OCI-LY7 (cell line): ENCODE measurements at regions of chr11 and their contacts with region 1.

Region 1: DNA sequence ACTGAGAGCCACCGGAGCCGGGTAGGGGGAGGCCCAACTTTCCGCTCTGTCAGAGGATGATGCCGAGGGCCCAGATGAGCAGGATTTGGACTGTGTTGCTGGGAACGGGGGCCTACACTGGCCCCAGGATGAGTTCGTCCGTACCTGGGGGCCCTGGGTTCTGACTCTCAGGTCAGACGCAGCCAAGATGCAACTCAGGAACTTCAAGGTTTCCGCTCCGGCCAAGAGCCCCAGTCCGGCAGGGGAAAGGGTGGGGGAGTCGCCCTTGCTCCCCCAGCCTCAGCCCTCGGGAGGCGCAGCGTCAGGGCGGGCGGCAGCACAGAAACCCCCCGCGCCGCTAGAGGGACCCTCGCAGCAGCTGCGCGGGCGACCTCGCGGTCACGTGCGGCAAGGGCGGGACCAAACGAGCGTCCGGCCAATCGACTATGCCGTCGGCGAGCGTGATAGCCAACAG is 241 bp upstream of the ARL2 start:
- DNase-seq: peak; percentile 98
- H3K4me3 ChIP-seq: peak overlapping the region; percentile 83
- H3K27ac ChIP-seq: peak overlapping the region; percentile 92
- H3K4me1 ChIP-seq: peaks cover 26% of the 10 kb centered on the region
- CTCF ChIP-seq: peak; percentile 71

Region 2: GRCh38 chr11:64916775-64917662 is 96.7 kb before region 1 on chr11 and contains the start of gene ATG2A:
- CTCF ChIA-PET with region 1: no interaction called
- POLR2A ChIA-PET with region 1: interaction called, 4 read pairs
- intact Hi-C with region 1: loop called (anchors 1 kb)
- DNase-seq: peak; percentile 100
- H3K4me3 ChIP-seq: peak within 1 kb of the TSS; percentile 87
- H3K27ac ChIP-seq: peak within 1 kb of the TSS; percentile 63
- H3K4me1 ChIP-seq: peaks cover 32% of the 10 kb centered on the region
- CTCF ChIP-seq: no peak
- total RNA-seq, gene ATG2A: 18.1 and 29.0 TPM in 2 replicates

Region 3: GRCh38 chr11:64971421-64972233 is 42.1 kb before region 1 on chr11 and contains the start of gene MAJIN:
- CTCF ChIA-PET with region 1: no interaction called
- POLR2A ChIA-PET with region 1: no interaction called
- intact Hi-C with region 1: loop called (anchors 1 kb)
- DNase-seq: no peak
- H3K4me3 ChIP-seq: no peak within 1 kb of the TSS
- H3K27ac ChIP-seq: peak within 1 kb of the TSS; percentile 93
- H3K4me1 ChIP-seq: peaks cover 59% of the 10 kb centered on the region
- CTCF ChIP-seq: no peak
- total RNA-seq, gene MAJIN: not detected in 2 replicates

Region 4: GRCh38 chr11:65027213-65028067 is 13.7 kb after region 1 on chr11 and contains the start of gene SNX15:
- CTCF ChIA-PET with region 1: no interaction called
- POLR2A ChIA-PET with region 1: interaction called, 3 read pairs
- intact Hi-C with region 1: loop called (anchors 1 kb)
- DNase-seq: peak; percentile 99
- H3K4me3 ChIP-seq: peak within 1 kb of the TSS; percentile 66
- H3K27ac ChIP-seq: peak within 1 kb of the TSS; percentile 75
- H3K4me1 ChIP-seq: peaks cover 18% of the 10 kb centered on the region
- CTCF ChIP-seq: peak; percentile 57
- total RNA-seq, gene SNX15: 25.9 and 31.6 TPM in 2 replicates

Region 5: DNA sequence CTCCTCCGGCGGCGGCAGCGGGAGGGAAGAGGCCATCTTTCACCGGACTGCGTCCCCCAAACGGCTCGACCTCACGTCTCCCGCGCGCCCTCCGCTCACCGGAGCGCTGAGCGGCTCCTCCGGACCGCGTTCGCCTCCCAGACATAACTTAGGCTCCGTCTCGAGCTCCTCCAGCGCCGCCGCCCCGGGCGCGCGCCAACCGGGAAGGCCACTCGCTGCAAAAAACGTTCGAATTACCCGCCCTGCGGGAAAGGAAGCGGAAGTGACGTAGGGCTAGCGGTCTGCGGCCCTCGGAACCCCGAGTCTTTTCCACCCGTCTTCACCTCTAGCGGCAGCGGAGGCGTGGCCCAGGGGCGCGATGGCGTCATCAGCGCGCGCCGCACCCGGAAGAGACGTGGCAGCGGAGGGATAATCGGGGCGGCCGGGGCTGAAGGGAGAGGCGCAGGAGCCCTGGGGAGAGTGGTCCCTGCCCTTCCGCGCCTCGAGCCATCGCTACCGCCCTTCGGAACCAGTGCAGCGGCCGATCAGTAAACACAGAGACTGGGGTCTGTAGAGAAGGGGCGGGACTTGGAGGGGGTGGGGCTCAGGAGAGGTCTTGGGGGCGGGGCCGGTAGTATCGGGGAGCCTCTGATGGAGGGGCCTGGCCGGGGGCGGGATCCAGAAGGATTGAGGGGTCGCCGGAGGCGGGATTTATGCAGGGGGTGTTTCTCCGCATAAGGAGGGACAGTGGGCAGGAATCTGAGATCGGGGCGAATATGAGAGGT is 70.3 kb after region 1 on chr11 and contains the starts of genes CDCA5 and ZFPL1:
- CTCF ChIA-PET with region 1: interaction called, 3 read pairs
- POLR2A ChIA-PET with region 1: no interaction called
- intact Hi-C with region 1: loop called (anchors 5 kb)
- DNase-seq: peak; percentile 97
- H3K4me3 ChIP-seq: peak within 1 kb of the TSS; percentile 91
- H3K27ac ChIP-seq: peak within 1 kb of the TSS; percentile 74
- H3K4me1 ChIP-seq: peaks cover 49% of the 10 kb centered on the region
- CTCF ChIP-seq: no peak
- total RNA-seq, gene CDCA5: 119 and 135 TPM in 2 replicates
- total RNA-seq, gene ZFPL1: 39.5 and 43.9 TPM in 2 replicates

Region 6: DNA sequence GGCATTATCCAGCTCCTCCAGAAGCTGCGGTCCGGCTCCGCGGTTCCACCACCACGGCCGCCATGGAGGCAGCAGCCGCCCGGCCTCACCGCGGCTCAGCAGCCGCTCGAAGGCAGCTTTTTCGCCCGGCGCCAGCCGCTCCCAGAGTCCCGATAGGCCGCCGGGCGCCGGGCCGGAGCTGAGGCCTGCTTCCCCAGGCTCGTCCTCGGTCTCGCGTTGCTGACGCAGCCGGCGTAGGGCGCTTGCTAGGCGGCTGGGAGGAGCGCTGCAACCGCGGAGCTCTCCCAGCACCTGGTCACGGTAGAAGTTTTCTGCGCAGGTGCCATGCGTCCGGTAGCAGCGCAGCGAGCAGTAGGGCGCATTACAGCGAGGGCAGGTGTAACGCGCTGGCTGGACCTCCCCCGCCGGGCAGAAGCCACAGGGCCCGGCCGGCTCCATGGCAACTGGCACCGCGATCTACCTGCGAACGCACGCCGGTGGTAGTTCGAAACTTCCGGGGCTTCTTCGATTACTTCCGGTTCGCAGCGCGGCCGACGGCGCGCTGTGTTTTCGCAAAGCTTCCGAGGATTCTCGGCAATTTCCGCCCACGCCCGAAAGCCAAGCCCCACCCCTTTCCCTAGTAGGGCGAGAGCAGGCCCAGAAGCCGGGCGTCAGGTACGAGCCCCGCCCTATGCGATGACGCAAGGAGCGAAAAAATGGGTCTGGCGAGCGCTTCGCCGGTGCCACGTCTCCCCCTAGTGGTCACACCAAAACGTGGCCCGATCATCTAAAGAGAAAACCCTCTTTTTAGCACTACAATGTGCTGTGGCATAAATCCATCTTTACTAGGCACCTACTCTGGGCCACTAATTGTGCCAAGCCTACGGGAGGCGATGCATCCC is 103.7 kb after region 1 on chr11 and contains the start of gene ZNHIT2:
- CTCF ChIA-PET with region 1: no interaction called
- POLR2A ChIA-PET with region 1: interaction called, 4 read pairs
- intact Hi-C with region 1: loop called (anchors 1 kb)
- DNase-seq: peak; percentile 100
- H3K4me3 ChIP-seq: peak within 1 kb of the TSS; percentile 81
- H3K27ac ChIP-seq: peak within 1 kb of the TSS; percentile 78
- H3K4me1 ChIP-seq: peaks cover 62% of the 10 kb centered on the region
- CTCF ChIP-seq: peak; percentile 92
- total RNA-seq, gene ZNHIT2: 29.9 and 32.4 TPM in 2 replicates

Region 7: DNA sequence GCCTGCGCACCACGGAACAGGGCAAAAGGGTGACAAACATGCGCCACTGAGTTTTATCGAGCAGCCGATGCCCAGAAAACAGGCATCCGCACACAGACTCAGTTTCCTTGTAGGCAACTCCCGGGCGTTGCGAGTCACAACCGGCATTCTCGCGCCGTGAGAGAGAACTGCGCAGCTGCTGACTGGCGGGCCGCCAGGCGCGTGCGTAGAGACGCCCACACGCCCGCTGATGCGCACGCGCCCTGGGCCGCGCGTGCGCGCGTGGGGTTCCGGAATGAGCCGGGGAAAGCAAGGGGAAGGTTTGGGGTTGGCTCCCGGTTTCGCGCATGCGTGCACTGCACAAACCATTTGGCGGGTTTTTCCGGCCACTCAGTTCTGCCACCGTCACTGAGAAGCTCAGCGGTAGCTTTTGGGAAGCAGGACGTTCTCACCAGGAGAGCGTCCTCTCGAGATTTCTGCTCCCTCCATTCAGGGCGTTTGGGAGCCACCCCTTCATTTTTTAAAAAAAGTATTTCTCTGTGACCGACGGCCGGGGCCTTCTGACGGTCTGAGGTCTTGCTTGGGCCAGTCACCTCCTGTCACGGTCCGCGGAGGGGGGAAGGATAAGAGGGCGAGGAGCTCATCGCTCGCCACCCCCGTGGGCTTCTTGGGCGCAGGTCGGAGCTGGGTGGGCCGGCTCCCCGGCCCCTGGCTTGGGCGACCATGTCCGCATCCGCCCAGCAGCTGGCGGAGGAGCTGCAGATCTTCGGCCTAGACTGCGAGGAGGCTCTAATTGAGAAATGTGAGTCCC is 248.1 kb after region 1 on chr11 and contains the start of gene POLA2:
- CTCF ChIA-PET with region 1: no interaction called
- POLR2A ChIA-PET with region 1: no interaction called
- intact Hi-C with region 1: loop called (anchors 10 kb)
- DNase-seq: peak; percentile 98
- H3K4me3 ChIP-seq: peak within 1 kb of the TSS; percentile 78
- H3K27ac ChIP-seq: peak within 1 kb of the TSS; percentile 70
- H3K4me1 ChIP-seq: peaks cover 25% of the 10 kb centered on the region
- CTCF ChIP-seq: no peak
- total RNA-seq, gene POLA2: 47.5 and 50.0 TPM in 2 replicates